ENCODE measurements at regions of chr6 and their contacts with region 1.

Region 1: DNA sequence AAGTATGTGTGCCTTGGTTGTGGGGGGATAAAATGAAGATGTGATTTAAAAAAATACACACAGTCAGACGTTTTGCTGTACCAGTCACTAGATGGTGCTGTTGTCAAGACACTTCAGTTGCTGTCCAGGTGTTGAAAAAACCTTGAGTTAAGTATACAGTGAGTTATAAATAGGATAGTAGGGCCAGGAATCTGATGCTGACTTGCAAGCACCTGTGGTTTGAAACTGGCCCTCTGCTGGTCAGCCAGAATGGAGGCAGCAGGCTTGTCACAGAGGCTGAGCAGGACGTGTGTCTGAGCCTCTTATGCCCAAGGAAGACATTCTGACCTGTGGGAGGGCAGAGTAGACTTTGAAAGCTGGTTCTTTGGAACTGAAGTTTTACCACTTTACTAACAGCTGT is 27.8 kb downstream of the RNF8 start:
- DNase-seq: no peak
- ATAC-seq: peak in 4 of 8 donors; percentile 56 to 71 (median 61)
- H3K4me3 ChIP-seq: no peak overlapping the region
- H3K27ac ChIP-seq: no peak overlapping the region
- H3K4me1 ChIP-seq: no peaks in the 10 kb centered on the region
- H3K27me3 ChIP-seq: no peaks in the 10 kb centered on the region
- CTCF ChIP-seq: peak; percentile 30 to 69 (median 54)

Region 2: GRCh38 chr6:37483917-37484785 is 102.6 kb after region 1 on chr6:
- intact Hi-C with region 1: loop called in 1 of 10 experiments (anchors 5 kb)
- DNase-seq: peak; percentile 48 to 70
- ATAC-seq: peak in 7 of 8 donors; percentile 59 to 75 (median 68)
- H3K4me3 ChIP-seq: no peak overlapping the region
- H3K27ac ChIP-seq: no peak overlapping the region
- H3K4me1 ChIP-seq: peaks cover 0 to 43% (median 27%) of the 10 kb centered on the region in 9 donors
- H3K27me3 ChIP-seq: no peaks in the 10 kb centered on the region
- CTCF ChIP-seq: peak; percentile 57 to 85 (median 79)

Region 3: GRCh38 chr6:37838219-37838921 is 456.8 kb after region 1 on chr6:
- intact Hi-C with region 1: no loop called
- DNase-seq: no peak
- ATAC-seq: peak in 1 of 8 donors; percentile 41
- H3K4me3 ChIP-seq: no peak overlapping the region
- H3K27ac ChIP-seq: no peak overlapping the region
- H3K4me1 ChIP-seq: peaks cover 0 to 48% (median 3%) of the 10 kb centered on the region in 9 donors
- H3K27me3 ChIP-seq: no peaks in the 10 kb centered on the region
- CTCF ChIP-seq: no peak